Dendritic cell treated with granulocyte-macrophage colony-stimulating factor and Interleukin-4, amounts not matched to agents 40 ng/mL and 50 ng/mL, for 4 days (primary cell): ENCODE measurements at regions of chr6 and their contacts with region 1.

Region 1: GRCh38 chr6:4313044-4313686 is 177.8 kb upstream of the ECI2 start:
- H3K4me3 Mint-ChIP-seq: no peak overlapping the region
- H3K27ac Mint-ChIP-seq: no peak overlapping the region
- H3K4me1 Mint-ChIP-seq: peaks cover 26% of the 10 kb centered on the region
- H3K27me3 Mint-ChIP-seq: peaks cover 6% of the 10 kb centered on the region

Region 2: GRCh38 chr6:4775584-4776494 is 462.7 kb after region 1 on chr6 and contains the start of gene CDYL:
- intact Hi-C with region 1: loop called (anchors 10 kb)
- H3K4me3 Mint-ChIP-seq: peak within 1 kb of the TSS; percentile 84
- H3K27ac Mint-ChIP-seq: peak within 1 kb of the TSS; percentile 74
- H3K4me1 Mint-ChIP-seq: peaks cover 48% of the 10 kb centered on the region
- H3K27me3 Mint-ChIP-seq: peaks cover 24% of the 10 kb centered on the region

Region 3: DNA sequence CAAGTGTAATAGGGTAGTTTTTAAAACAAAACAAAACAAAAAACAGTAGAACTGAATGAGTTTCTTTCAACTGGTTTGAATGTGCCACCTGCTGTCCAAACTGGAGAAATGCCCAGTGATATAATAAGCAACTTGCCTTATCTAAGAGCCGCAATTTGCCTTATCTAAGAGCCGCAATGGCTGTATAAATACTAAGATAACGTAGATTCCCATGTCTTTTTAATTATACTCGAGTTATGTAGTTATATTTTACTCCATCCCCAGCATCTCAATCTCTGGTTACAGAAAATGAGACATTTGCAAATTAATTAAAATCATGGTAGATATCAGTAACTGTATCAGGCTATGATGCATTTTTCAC is 623.5 kb after region 1 on chr6:
- intact Hi-C with region 1: loop called (anchors 5 kb)
- H3K4me3 Mint-ChIP-seq: no peak overlapping the region
- H3K27ac Mint-ChIP-seq: no peak overlapping the region
- H3K4me1 Mint-ChIP-seq: peaks cover 20% of the 10 kb centered on the region
- H3K27me3 Mint-ChIP-seq: no peaks in the 10 kb centered on the region

Region 4: DNA sequence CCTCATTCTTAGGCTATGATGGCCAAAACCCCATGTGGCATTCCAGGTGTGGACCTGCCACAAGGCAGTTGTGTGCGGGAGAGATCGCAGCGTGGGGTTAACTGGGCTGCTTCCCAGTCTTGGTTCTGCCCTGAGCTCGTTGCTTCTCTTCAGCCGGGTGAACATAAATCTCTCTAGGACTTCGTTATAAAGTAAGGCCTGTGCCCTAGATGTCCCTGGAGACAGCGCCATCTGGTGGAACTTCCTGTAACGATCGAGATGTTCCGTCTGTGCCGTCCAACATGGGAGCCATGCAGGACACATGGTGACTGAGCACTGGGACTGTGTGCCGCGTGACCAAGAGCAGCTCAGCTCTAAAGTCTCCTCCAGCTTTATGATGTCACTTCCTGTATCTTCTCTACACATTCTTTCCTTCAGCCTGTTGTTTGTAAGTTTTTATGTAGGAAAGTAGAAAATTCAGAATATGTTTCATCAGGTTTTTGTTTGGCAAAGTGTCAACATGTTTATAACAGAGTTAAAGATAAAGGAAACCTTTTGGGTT is 717.5 kb after region 1 on chr6:
- intact Hi-C with region 1: loop called (anchors 5 kb)
- H3K4me3 Mint-ChIP-seq: no peak overlapping the region
- H3K27ac Mint-ChIP-seq: no peak overlapping the region
- H3K4me1 Mint-ChIP-seq: peaks cover 32% of the 10 kb centered on the region
- H3K27me3 Mint-ChIP-seq: peaks cover 3% of the 10 kb centered on the region